Activated CD4-positive, alpha-beta memory T cell treated with anti-CD3 and anti-CD28 coated beads for 36 hours (primary cell): ENCODE measurements at regions of chr1 and their contacts with region 1.

Region 1: GRCh38 chr1:84143796-84144565 is at the start of gene PRKACB:
- DNase-seq: no peak
- H3K4me3 Mint-ChIP-seq: peak within 1 kb of the TSS; percentile 89
- H3K27ac Mint-ChIP-seq: peak within 1 kb of the TSS; percentile 98
- H3K4me1 Mint-ChIP-seq: peaks cover 47% of the 10 kb centered on the region
- H3K27me3 Mint-ChIP-seq: no peaks in the 10 kb centered on the region
- total RNA-seq, gene PRKACB: 20.1 to 22.7 TPM

Region 2: GRCh38 chr1:84010136-84010535 is 133.8 kb before region 1 on chr1:
- CTCF ChIA-PET with region 1: no interaction called
- POLR2A ChIA-PET with region 1: no interaction called
- intact Hi-C with region 1: no loop called
- DNase-seq: no peak
- H3K4me3 Mint-ChIP-seq: no peak overlapping the region
- H3K27ac Mint-ChIP-seq: no peak overlapping the region
- H3K4me1 Mint-ChIP-seq: no peaks in the 10 kb centered on the region
- H3K27me3 Mint-ChIP-seq: peaks cover 17% of the 10 kb centered on the region

Region 3: GRCh38 chr1:84077476-84078107 is 66.4 kb before region 1 on chr1:
- CTCF ChIA-PET with region 1: no interaction called
- POLR2A ChIA-PET with region 1: interaction called, 4 read pairs
- intact Hi-C with region 1: loop called (anchors 2 kb)
- DNase-seq: peak; percentile 78
- H3K4me3 Mint-ChIP-seq: peak overlapping the region; percentile 83
- H3K27ac Mint-ChIP-seq: peak overlapping the region; percentile 38
- H3K4me1 Mint-ChIP-seq: peaks cover 11% of the 10 kb centered on the region
- H3K27me3 Mint-ChIP-seq: peaks cover 3% of the 10 kb centered on the region

Region 4: DNA sequence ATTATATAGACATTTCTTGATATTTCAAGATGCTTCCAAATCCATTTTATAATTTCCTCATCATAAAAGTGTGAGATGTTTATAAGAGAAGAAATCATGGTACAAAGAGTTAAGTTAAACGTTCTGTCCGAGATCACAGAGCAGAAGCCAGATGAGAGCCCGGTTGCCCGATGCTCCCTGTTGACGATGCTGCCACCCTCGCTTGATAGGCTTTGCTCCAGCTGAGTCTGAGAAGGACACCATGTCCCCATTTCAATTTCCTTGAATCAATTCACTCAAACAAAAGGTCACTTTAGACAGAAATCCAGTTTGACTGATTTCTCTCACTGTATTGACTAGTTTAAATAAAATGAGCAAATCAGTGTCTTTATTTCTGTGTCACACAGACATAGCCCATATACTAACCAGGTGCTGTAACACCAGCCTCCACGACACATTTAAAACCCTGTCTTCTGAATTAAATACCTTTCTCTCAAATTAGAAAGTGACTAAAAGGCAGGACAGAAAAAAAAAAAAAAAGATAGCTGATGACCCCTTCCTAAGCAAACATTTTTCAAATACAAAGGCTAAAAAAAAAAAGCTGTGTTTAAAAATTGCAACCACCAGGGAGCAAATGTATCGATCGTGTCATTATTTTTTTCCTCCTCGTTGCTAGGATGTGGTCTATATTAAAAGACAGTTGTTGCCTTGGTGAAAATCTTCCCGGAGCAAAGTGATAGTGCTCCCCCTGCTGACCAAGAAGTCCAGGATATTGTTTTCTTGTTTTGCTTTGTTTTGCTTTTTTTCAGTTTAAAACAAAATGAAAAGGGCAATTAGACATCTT is 289.5 kb after region 1 on chr1:
- CTCF ChIA-PET with region 1: interaction called, 184 read pairs
- POLR2A ChIA-PET with region 1: interaction called, 3 read pairs
- intact Hi-C with region 1: loop called (anchors 1 kb)
- DNase-seq: peak; percentile 63
- H3K4me3 Mint-ChIP-seq: peak overlapping the region; percentile 48
- H3K27ac Mint-ChIP-seq: peak overlapping the region; percentile 11
- H3K4me1 Mint-ChIP-seq: peaks cover 13% of the 10 kb centered on the region
- H3K27me3 Mint-ChIP-seq: no peaks in the 10 kb centered on the region

Region 5: DNA sequence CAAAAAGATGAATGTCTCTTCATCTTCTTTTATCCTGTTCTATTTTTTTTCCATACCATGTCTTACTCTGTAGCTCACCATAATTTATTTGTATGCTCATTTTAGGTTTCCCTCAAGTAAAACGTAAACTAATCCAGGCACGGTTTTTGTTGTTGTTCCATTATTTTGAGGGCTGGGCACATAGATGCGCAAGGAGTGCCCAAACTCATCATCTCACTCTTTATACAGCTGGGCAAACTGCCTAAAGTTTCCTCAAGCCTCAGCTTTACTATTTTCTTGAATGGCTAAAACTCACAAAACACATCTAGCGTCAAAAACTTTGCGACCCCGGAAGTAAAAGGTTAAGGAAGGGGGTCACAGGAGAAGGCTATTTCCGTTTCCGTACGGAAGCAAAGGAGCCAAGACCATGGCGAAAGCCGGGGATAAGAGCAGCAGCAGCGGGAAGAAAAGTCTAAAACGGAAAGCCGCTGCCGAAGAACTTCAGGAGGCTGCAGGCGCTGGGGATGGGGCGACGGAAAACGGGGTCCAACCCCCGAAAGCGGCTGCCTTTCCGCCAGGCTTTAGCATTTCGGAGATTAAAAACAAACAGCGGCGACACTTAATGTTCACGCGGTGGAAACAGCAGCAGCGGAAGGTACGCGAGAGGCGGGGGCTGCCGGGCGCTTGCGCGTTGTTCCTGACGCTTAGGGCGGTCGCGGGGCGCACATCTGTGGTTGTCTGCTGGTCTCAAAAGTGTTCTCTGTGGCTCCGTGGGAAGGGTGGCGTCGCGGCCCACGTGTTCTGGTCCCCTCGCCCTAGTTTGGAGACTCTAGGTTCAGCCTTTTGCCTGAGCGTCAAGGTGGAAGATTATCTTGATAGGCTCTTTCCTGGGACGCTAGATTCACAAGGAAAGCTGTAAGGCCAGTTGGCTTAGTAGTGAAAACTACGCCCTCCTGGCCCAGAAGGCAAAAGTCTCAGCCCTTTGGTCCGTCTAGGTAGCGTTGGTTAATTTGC is 335.2 kb after region 1 on chr1 and contains the start of gene RPF1:
- CTCF ChIA-PET with region 1: interaction called, 9 read pairs
- POLR2A ChIA-PET with region 1: no interaction called
- intact Hi-C with region 1: loop called (anchors 2 kb)
- DNase-seq: peak; percentile 82
- H3K4me3 Mint-ChIP-seq: peak within 1 kb of the TSS; percentile 96
- H3K27ac Mint-ChIP-seq: peak within 1 kb of the TSS; percentile 96
- H3K4me1 Mint-ChIP-seq: peaks cover 34% of the 10 kb centered on the region
- H3K27me3 Mint-ChIP-seq: peaks cover 16% of the 10 kb centered on the region
- total RNA-seq, gene RPF1: 55.0 to 56.5 TPM

Region 6: GRCh38 chr1:84573967-84574842 is 430.2 kb after region 1 on chr1 and contains the start of gene CTBS:
- CTCF ChIA-PET with region 1: interaction called, 4 read pairs
- POLR2A ChIA-PET with region 1: interaction called, 10 read pairs
- intact Hi-C with region 1: loop called (anchors 1 kb)
- DNase-seq: peak; percentile 90
- H3K4me3 Mint-ChIP-seq: peak within 1 kb of the TSS; percentile 98
- H3K27ac Mint-ChIP-seq: peak within 1 kb of the TSS; percentile 100
- H3K4me1 Mint-ChIP-seq: peaks cover 35% of the 10 kb centered on the region
- H3K27me3 Mint-ChIP-seq: peaks cover 1% of the 10 kb centered on the region
- total RNA-seq, gene CTBS: 22.9 to 24.2 TPM

Region 7: GRCh38 chr1:84753516-84754385 is 609.8 kb after region 1 on chr1:
- CTCF ChIA-PET with region 1: interaction called, 23 read pairs
- POLR2A ChIA-PET with region 1: no interaction called
- intact Hi-C with region 1: loop called (anchors 1 kb)
- DNase-seq: peak; percentile 86
- H3K4me3 Mint-ChIP-seq: no peak overlapping the region
- H3K27ac Mint-ChIP-seq: no peak overlapping the region
- H3K4me1 Mint-ChIP-seq: peaks cover 14% of the 10 kb centered on the region
- H3K27me3 Mint-ChIP-seq: peaks cover 27% of the 10 kb centered on the region

Region 8: DNA sequence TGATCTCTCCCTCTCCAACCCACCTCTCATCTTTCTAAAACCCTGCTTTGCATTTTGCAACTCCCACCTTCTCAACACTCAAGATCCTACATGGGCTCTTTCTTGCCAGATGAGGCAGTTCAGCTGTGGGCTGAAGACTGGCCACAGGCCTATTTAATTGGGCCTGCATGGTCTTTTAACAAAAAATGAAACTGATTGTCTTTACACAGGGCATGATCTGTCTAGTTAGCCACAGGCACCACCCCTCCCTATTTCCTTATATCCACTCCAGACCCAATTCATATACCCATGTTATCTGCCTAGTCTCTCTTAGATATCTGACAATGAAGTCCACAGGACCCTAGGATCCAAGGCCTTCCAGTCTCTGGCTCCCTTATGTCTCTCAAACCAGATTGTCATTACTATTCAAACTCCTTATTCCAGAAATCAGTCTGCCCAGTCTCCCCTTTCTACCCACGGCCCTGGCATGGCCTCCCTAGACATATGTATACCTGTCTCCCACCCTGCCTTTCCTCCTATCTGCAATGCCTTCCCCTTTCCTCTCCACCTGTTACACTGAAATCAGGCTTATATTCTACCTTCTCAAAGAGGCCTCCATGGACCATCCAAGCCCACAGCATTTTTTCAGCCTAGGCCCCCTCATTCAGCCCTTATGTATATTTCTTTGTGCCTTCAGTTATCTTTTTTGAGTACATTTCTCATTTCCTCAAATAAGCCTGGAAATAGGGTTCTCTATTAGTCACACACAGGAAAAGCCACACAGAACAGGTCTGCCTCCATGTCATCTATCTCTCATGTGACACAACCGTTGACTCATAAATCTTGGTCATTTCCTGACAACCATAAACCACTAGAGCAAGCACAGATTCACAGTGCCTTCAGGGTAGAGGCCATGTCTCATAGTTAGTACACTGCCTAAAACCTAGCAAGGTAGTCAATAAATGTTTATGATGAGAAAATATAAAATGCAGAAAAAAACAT is 710.0 kb after region 1 on chr1:
- CTCF ChIA-PET with region 1: no interaction called
- POLR2A ChIA-PET with region 1: no interaction called
- intact Hi-C with region 1: loop called (anchors 2 kb)
- DNase-seq: peak; percentile 54
- H3K4me3 Mint-ChIP-seq: peak overlapping the region; percentile 4
- H3K27ac Mint-ChIP-seq: peak overlapping the region; percentile 32
- H3K4me1 Mint-ChIP-seq: peaks cover 29% of the 10 kb centered on the region
- H3K27me3 Mint-ChIP-seq: no peaks in the 10 kb centered on the region